Adrenal gland (tissue), 19 donors: ENCODE measurements at regions of chr11 and their contacts with region 1.

Region 1: GRCh38 chr11:95849087-95849825 is 59.0 kb downstream of the CEP57 start:
- DNase-seq: peak; percentile 28 to 70 (median 40)
- H3K4me3 ChIP-seq: no peak overlapping the region
- H3K27ac ChIP-seq: peak overlapping the region in 1 of 5 donors; percentile 18
- H3K4me1 ChIP-seq: peaks cover 0 to 7% of the 10 kb centered on the region in 2 donors
- H3K27me3 ChIP-seq: no peaks in the 10 kb centered on the region
- CTCF ChIP-seq: peak in 5 of 6 experiments; percentile 12 to 50 (median 43)
- POLR2A ChIP-seq: no peak

Region 2: DNA sequence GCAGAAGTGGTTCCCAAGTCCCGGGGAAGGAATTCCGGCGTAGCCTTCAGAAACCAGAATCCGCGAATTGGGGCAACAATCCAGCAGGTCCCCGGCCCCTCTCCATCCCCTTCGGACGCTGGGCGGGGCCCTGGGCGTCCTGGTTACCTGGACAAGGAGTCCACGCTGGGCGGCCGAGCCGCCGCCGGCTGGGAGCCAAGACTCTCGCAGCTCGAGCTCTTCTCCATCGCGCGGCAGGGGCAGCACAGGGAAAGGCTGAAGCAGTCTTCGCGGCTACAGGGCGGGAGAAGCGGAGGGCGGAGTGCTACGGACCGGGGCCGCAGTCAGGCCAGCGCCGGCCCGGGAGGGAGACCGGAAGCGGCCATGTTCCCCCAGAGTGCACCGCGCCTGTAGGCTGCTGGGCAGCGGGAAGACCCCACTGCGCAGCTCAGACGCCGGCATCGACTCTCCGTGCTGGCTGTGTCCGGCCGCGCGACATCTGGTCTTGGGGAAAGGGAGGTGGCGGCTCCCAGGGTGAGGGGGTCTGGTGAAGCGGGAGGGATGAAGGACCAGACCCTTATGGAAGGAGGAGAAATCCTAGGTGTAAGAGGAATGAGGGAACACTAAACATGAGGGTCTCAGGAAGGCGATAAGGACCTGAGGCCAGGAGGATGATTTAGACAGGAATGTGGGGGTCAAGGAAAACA is 74.6 kb after region 1 on chr11 and contains the start of gene MTMR2:
- intact Hi-C with region 1: loop called in 1 of 2 experiments (anchors 10 kb)
- DNase-seq: peak; percentile 67 to 81 (median 74)
- H3K4me3 ChIP-seq: peak within 1 kb of the TSS; percentile 52 to 82 (median 78)
- H3K27ac ChIP-seq: peak within 1 kb of the TSS; percentile 56 to 95 (median 90)
- H3K4me1 ChIP-seq: peaks cover 8 to 36% of the 10 kb centered on the region in 2 donors
- H3K27me3 ChIP-seq: no peaks in the 10 kb centered on the region
- CTCF ChIP-seq: no peak
- POLR2A ChIP-seq: peak; percentile 64 to 66
- total RNA-seq, gene MTMR2: 17.6 to 31.6 (median 24.8) TPM

Region 3: DNA sequence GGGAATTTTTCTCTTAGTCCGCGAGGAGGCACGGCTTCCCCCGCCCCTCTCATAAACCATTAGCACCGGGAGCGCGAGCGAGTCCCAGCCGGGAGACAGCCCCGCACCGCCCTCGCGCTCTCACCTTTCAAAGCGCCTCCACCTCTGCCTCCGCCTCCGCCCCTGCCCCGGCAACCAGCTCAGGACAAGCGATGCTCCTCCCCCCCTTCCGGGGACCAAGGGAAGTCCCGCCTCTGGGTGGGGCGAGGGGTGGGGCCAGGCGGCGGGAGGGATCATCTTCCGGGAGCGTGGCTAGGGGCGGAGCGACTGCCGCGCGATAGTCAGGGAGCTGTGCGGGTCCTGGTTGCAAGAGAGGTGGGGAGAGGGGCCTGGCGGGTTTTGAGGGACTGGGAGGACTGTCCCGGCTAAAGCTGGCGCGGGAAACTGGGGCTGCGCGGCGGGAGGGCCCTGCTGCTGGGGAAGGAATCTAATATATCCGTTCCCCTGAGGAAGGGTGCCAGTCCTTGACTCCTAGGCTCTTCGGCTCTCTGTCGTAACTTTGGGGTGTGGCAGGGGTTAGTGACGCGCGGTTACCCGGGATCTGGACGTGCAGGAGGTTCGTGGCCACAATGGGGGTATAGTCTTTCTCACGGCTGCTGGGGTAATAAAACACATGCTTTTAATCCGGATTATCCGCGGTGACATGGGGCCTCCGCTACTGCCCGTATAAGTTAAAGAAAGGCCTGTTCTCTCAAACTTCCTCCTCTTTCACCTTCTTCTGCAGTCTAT is 540.6 kb after region 1 on chr11 and contains the starts of genes CCDC82 and JRKL:
- intact Hi-C with region 1: loop called in 1 of 2 experiments (anchors 10 kb)
- DNase-seq: peak; percentile 96 to 98 (median 97)
- H3K4me3 ChIP-seq: peak within 1 kb of the TSS; percentile 2 to 84 (median 74)
- H3K27ac ChIP-seq: peak within 1 kb of the TSS; percentile 65 to 93 (median 85)
- H3K4me1 ChIP-seq: peaks cover 5 to 28% of the 10 kb centered on the region in 2 donors
- H3K27me3 ChIP-seq: no peaks in the 10 kb centered on the region
- CTCF ChIP-seq: peak in 2 of 6 experiments; percentile 1 to 6
- POLR2A ChIP-seq: peak; percentile 65 to 88
- total RNA-seq, gene CCDC82: 4.7 to 48.1 (median 14.7) TPM
- total RNA-seq, gene JRKL: 0.87 to 10.2 (median 5.2) TPM